ENCODE measurements at regions of chr13 and their contacts with region 1.

Region 1: GRCh38 chr13:29850224-29850898 is at the start of gene UBL3:
- DNase-seq: peak; percentile 97
- H3K4me3 Mint-ChIP-seq: peak within 1 kb of the TSS; percentile 89
- H3K27ac Mint-ChIP-seq: peak within 1 kb of the TSS; percentile 100
- H3K4me1 Mint-ChIP-seq: peaks cover 12% of the 10 kb centered on the region
- H3K27me3 Mint-ChIP-seq: no peaks in the 10 kb centered on the region
- CTCF ChIP-seq: no peak
- total RNA-seq, gene UBL3: 18.2 and 22.4 TPM in 2 replicates

Region 2: DNA sequence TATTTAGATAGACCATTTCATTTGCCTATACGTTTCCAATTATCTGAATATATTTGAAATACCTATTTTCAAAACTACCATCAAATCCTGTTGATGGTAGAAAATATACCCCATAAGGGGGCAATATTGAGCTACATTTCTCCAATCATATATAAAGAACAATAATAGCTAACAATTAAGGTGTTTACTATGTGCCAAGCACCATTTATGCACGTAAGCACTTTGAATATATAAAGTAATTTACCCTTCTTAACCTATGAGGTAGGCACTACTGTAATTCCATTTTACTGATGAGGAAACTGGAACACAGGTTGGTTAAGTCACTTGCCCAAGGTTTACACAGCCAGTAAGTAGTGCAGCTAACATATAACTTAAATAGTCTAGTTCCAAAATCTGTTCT is 79.1 kb before region 1 on chr13:
- CTCF ChIA-PET with region 1: interaction called, 11 read pairs
- POLR2A ChIA-PET with region 1: interaction called, 19 read pairs
- intact Hi-C with region 1: loop called (anchors 1 kb)
- DNase-seq: peak; percentile 45
- H3K4me3 Mint-ChIP-seq: no peak overlapping the region
- H3K27ac Mint-ChIP-seq: no peak overlapping the region
- H3K4me1 Mint-ChIP-seq: no peaks in the 10 kb centered on the region
- H3K27me3 Mint-ChIP-seq: no peaks in the 10 kb centered on the region
- CTCF ChIP-seq: peak; percentile 43

Region 3: GRCh38 chr13:29892151-29892550 is 41.8 kb after region 1 on chr13:
- CTCF ChIA-PET with region 1: no interaction called
- POLR2A ChIA-PET with region 1: interaction called, 12 read pairs
- intact Hi-C with region 1: no loop called
- DNase-seq: no peak
- H3K4me3 Mint-ChIP-seq: no peak overlapping the region
- H3K27ac Mint-ChIP-seq: no peak overlapping the region
- H3K4me1 Mint-ChIP-seq: peaks cover 10% of the 10 kb centered on the region
- H3K27me3 Mint-ChIP-seq: no peaks in the 10 kb centered on the region
- CTCF ChIP-seq: no peak

Region 4: GRCh38 chr13:29908416-29908815 is 58.1 kb after region 1 on chr13:
- CTCF ChIA-PET with region 1: interaction called, 9 read pairs
- POLR2A ChIA-PET with region 1: interaction called, 133 read pairs
- intact Hi-C with region 1: no loop called
- DNase-seq: peak; percentile 75
- H3K4me3 Mint-ChIP-seq: peak overlapping the region; percentile 7
- H3K27ac Mint-ChIP-seq: peak overlapping the region; percentile 92
- H3K4me1 Mint-ChIP-seq: peaks cover 55% of the 10 kb centered on the region
- H3K27me3 Mint-ChIP-seq: no peaks in the 10 kb centered on the region
- CTCF ChIP-seq: no peak

Region 5: GRCh38 chr13:30002577-30002976 is 152.2 kb after region 1 on chr13:
- CTCF ChIA-PET with region 1: interaction called, 3 read pairs
- POLR2A ChIA-PET with region 1: interaction called, 5 read pairs
- intact Hi-C with region 1: loop called (anchors 5 kb)
- DNase-seq: peak; percentile 67
- H3K4me3 Mint-ChIP-seq: peak overlapping the region; percentile 2
- H3K27ac Mint-ChIP-seq: no peak overlapping the region
- H3K4me1 Mint-ChIP-seq: peaks cover 19% of the 10 kb centered on the region
- H3K27me3 Mint-ChIP-seq: no peaks in the 10 kb centered on the region
- CTCF ChIP-seq: no peak

Region 6: DNA sequence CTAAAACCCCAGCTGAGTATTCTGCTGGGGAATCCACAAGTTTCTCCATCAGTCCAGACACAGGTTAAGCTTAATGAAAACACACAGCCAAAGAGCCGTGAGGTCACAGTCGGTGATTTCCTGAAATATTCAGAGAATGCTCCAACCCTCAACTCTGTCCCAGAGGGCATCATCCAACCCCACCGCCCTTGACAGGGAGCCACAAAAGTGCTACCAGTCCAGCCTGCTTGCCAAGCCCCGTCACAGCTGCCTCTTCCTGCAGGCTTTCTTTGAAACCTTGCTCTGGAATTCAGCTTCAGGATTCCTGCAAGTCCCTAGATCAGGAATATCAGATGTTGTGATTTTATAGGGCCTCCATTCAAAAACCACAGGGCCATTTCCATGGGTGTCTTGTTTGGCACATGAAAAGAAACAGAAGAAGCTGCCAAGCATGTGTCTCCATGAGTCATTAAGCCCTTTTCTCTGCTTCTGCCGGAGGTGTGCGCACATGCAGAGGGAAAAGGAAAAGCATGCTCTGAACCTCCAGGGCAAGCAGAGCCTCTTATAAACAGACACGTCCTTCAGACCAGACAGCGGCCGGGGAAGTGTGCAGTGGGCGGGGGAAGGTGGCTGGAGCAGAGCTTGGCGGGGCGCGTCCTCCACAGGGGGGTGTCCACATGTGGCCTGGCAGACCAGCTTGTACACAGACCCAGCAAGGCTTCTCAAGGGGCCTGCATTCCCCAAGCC is 292.3 kb after region 1 on chr13:
- CTCF ChIA-PET with region 1: interaction called, 3 read pairs
- POLR2A ChIA-PET with region 1: interaction called, 14 read pairs
- intact Hi-C with region 1: no loop called
- DNase-seq: peak; percentile 94
- H3K4me3 Mint-ChIP-seq: peak overlapping the region; percentile 61
- H3K27ac Mint-ChIP-seq: peak overlapping the region; percentile 98
- H3K4me1 Mint-ChIP-seq: peaks cover 36% of the 10 kb centered on the region
- H3K27me3 Mint-ChIP-seq: no peaks in the 10 kb centered on the region
- CTCF ChIP-seq: no peak

Region 7: GRCh38 chr13:30332456-30333143 is 482.2 kb after region 1 on chr13:
- CTCF ChIA-PET with region 1: no interaction called
- POLR2A ChIA-PET with region 1: no interaction called
- intact Hi-C with region 1: no loop called
- DNase-seq: no peak
- H3K4me3 Mint-ChIP-seq: no peak overlapping the region
- H3K27ac Mint-ChIP-seq: no peak overlapping the region
- H3K4me1 Mint-ChIP-seq: peaks cover 4% of the 10 kb centered on the region
- H3K27me3 Mint-ChIP-seq: no peaks in the 10 kb centered on the region
- CTCF ChIP-seq: no peak